Activated CD8-positive, alpha-beta T cell treated with anti-CD3 and anti-CD28 coated beads, Interleukin-2, amount 10 ng/mL, durations not matched to agents 7 days and 5 days (primary cell): ENCODE measurements at regions of chr11 and their contacts with region 1.

Region 1: DNA sequence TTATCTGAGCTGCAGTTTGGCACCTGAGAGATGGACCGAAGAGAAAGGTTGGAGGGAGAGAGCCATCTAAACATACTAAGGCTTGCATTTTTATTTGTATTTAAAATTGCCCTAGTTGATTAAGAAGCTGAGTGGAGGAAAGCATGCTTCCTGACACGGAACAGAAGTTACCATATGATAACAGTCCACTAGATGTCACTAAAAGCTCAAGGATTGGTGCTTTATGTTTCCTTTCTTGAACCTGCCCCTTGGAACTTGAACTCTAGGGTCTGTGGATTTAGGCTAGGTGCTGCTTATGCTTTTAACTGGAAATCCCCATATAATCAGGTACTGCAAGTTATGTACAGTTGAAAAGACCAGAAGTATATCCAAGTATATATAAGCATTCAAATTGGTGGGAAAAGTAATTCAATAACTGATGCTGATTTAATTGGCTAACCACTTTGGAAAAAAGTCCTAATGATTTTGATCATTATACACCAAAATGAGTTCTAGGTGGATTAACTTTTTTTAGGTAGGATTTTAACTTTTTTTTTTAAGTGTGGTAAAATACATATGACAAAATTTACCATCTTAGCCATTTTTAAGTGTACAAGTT is 9.5 kb downstream of the RBMXL2 start:
- DNase-seq: peak; percentile 24
- ATAC-seq: peak; percentile 64
- H3K4me3 Mint-ChIP-seq: no peak overlapping the region
- H3K27ac Mint-ChIP-seq: no peak overlapping the region
- H3K4me1 Mint-ChIP-seq: no peaks in the 10 kb centered on the region
- H3K27me3 Mint-ChIP-seq: peaks cover 20% of the 10 kb centered on the region

Region 2: DNA sequence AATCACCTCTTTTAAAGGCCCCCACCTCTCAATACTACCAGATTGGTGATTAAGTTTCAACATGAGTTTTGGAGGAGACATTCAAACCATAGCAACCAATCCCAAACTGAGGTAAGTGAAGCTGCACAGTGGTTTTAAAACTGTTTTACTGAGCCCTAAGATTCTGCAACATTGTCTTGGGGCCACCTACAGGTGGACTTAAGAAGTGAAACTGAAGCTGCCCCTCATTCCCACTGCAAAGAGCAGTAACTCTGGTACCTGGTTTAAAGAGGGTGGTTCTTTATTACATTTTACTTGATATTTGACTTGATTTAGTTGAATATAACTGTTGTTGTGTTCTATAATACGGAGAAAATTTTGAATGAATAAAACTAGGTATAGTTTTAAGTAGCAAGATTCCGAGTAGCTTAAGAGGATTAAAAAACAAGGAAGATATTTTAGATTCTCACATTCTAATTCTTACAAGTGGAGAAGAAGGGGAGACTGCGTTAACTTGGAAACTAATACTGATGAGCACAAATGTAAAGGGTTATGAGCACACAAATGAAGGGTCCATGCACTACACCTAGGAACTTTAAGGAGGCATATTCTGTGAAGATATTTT is 180.1 kb after region 1 on chr11:
- CTCF ChIA-PET with region 1: interaction called, 15 read pairs
- POLR2A ChIA-PET with region 1: no interaction called
- DNase-seq: peak; percentile 25
- ATAC-seq: no peak
- H3K4me3 Mint-ChIP-seq: no peak overlapping the region
- H3K27ac Mint-ChIP-seq: no peak overlapping the region
- H3K4me1 Mint-ChIP-seq: no peaks in the 10 kb centered on the region
- H3K27me3 Mint-ChIP-seq: peaks cover 2% of the 10 kb centered on the region

Region 3: GRCh38 chr11:7442588-7443215 is 344.4 kb after region 1 on chr11:
- CTCF ChIA-PET with region 1: interaction called, 34 read pairs
- POLR2A ChIA-PET with region 1: no interaction called
- DNase-seq: peak; percentile 81
- ATAC-seq: peak; percentile 86
- H3K4me3 Mint-ChIP-seq: no peak overlapping the region
- H3K27ac Mint-ChIP-seq: no peak overlapping the region
- H3K4me1 Mint-ChIP-seq: peaks cover 3% of the 10 kb centered on the region
- H3K27me3 Mint-ChIP-seq: no peaks in the 10 kb centered on the region

Region 4: GRCh38 chr11:7690648-7691047 is 592.3 kb after region 1 on chr11:
- CTCF ChIA-PET with region 1: interaction called, 10 read pairs
- POLR2A ChIA-PET with region 1: no interaction called
- DNase-seq: no peak
- ATAC-seq: no peak
- H3K4me3 Mint-ChIP-seq: no peak overlapping the region
- H3K27ac Mint-ChIP-seq: no peak overlapping the region
- H3K4me1 Mint-ChIP-seq: no peaks in the 10 kb centered on the region
- H3K27me3 Mint-ChIP-seq: peaks cover 34% of the 10 kb centered on the region